ENCODE measurements at regions of chr19 and their contacts with region 1.

Region 1: GRCh38 chr19:40465557-40466150 is at the start of gene BLVRB:
- DNase-seq: peak; percentile 98 to 100
- ATAC-seq: peak; percentile 73 to 88
- H3K4me3 ChIP-seq: peak within 1 kb of the TSS; percentile 62
- H3K27ac ChIP-seq: peak within 1 kb of the TSS; percentile 86 to 89
- H3K4me1 ChIP-seq: peaks cover 38% of the 10 kb centered on the region
- CTCF ChIP-seq: no peak
- EP300 ChIP-seq: no peak
- POLR2A ChIP-seq: peak; percentile 95
- RAD21 ChIP-seq: no peak
- polyA plus RNA-seq, gene BLVRB: 202 and 241 TPM in 2 replicates

Region 2: GRCh38 chr19:40433391-40434216 is 32.0 kb before region 1 on chr19:
- CTCF ChIA-PET with region 1: interaction called, 950 read pairs
- POLR2A ChIA-PET with region 1: interaction called, 25 read pairs
- DNase-seq: peak; percentile 95 to 98
- ATAC-seq: peak; percentile 95 to 96
- H3K4me3 ChIP-seq: peak overlapping the region; percentile 43
- H3K27ac ChIP-seq: peak overlapping the region; percentile 90 to 95
- H3K4me1 ChIP-seq: peaks cover 28% of the 10 kb centered on the region
- CTCF ChIP-seq: no peak
- EP300 ChIP-seq: no peak
- POLR2A ChIP-seq: peak; percentile 90
- RAD21 ChIP-seq: no peak; a peak in 1 of 5 replicates

Region 3: DNA sequence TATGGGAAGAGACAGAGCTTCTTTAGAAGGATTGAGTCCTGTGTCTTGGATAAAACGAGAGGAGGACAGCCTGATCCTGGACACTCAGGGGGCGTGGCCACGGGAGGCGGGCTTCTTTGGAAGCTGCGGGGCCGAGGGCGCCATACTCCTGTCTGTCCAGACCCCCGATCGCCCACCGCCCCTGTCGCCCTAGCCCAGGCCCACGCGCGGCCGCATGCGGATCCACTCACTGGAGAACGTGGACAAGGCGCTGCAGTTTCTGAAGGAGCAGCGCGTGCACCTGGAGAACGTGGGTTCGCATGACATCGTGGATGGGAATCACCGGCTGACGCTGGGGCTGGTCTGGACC is 24.2 kb after region 1 on chr19:
- CTCF ChIA-PET with region 1: interaction called, 24 read pairs
- POLR2A ChIA-PET with region 1: interaction called, 14 read pairs
- DNase-seq: no peak
- ATAC-seq: peak in 1 of 2 experiments; percentile 2; a peak in 1 of 6 replicates
- H3K4me3 ChIP-seq: no peak overlapping the region
- H3K27ac ChIP-seq: no peak overlapping the region
- H3K4me1 ChIP-seq: 0 out of 3 replicates have a peak, but pooled peaks cover 6% of the 10 kb centered on the region
- CTCF ChIP-seq: no peak
- EP300 ChIP-seq: no peak
- POLR2A ChIP-seq: no peak
- RAD21 ChIP-seq: no peak

Region 4: GRCh38 chr19:40512473-40513344 is 47.1 kb after region 1 on chr19:
- CTCF ChIA-PET with region 1: interaction called, 85 read pairs
- POLR2A ChIA-PET with region 1: interaction called, 3 read pairs
- DNase-seq: peak in 1 of 2 experiments; percentile 65
- ATAC-seq: peak; percentile 73 to 76
- H3K4me3 ChIP-seq: peak overlapping the region; percentile 37
- H3K27ac ChIP-seq: 0 out of 6 replicates have a peak overlapping the region, but pooled peaks of 1 of the 2 experiments have one; percentile 0
- H3K4me1 ChIP-seq: peaks cover 5% of the 10 kb centered on the region; the same call in 1 of the 3 replicates
- CTCF ChIP-seq: no peak; the same call in 2 of the 3 replicates
- EP300 ChIP-seq: no peak
- POLR2A ChIP-seq: no peak
- RAD21 ChIP-seq: no peak

Region 5: GRCh38 chr19:40542202-40542859 is 76.7 kb after region 1 on chr19:
- CTCF ChIA-PET with region 1: interaction called, 29 read pairs
- POLR2A ChIA-PET with region 1: no interaction called
- DNase-seq: no peak
- ATAC-seq: no peak
- H3K4me3 ChIP-seq: no peak overlapping the region
- H3K27ac ChIP-seq: no peak overlapping the region
- H3K4me1 ChIP-seq: no peaks in the 10 kb centered on the region
- CTCF ChIP-seq: no peak
- EP300 ChIP-seq: no peak
- POLR2A ChIP-seq: no peak
- RAD21 ChIP-seq: no peak

Region 6: DNA sequence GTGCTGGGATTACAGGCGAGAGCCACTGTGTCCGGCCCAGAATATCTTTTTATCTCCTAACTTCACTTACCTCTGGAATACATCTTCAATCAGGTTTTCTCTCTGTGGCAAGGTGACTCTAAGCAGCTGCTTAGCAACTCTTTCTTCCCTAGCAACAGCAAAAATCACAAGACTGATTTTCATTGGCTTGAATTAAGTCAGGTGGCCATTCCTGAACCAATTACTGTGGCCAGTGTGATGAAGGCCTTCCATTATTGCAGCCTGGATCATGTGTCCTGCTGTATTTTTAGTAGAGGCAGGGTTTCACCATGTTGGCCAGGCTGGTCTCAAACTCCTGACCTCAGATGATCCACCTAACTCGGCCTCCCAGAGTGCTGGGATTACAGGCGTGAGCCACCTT is 126.5 kb after region 1 on chr19:
- CTCF ChIA-PET with region 1: interaction called, 128 read pairs
- POLR2A ChIA-PET with region 1: interaction called, 4 read pairs
- DNase-seq: peak; percentile 81 to 92
- ATAC-seq: peak in 1 of 2 experiments; percentile 58; a peak in 3 of 6 replicates
- H3K4me3 ChIP-seq: no peak overlapping the region
- H3K27ac ChIP-seq: no peak overlapping the region
- H3K4me1 ChIP-seq: peaks cover 36% of the 10 kb centered on the region
- CTCF ChIP-seq: no peak
- EP300 ChIP-seq: no peak
- POLR2A ChIP-seq: no peak
- RAD21 ChIP-seq: no peak

Region 7: GRCh38 chr19:40702337-40703012 is 236.8 kb after region 1 on chr19:
- CTCF ChIA-PET with region 1: no interaction called
- POLR2A ChIA-PET with region 1: no interaction called
- DNase-seq: peak; percentile 82 to 84
- ATAC-seq: peak; percentile 88 to 96
- H3K4me3 ChIP-seq: no peak overlapping the region
- H3K27ac ChIP-seq: peak overlapping the region in 1 of 2 experiments; percentile 44; a peak in 3 of 6 replicates
- H3K4me1 ChIP-seq: peaks cover 8% of the 10 kb centered on the region; the same call in 2 of the 3 replicates
- CTCF ChIP-seq: peak; percentile 69
- EP300 ChIP-seq: no peak
- POLR2A ChIP-seq: no peak
- RAD21 ChIP-seq: peak; percentile 71 to 83

Region 8: GRCh38 chr19:40831502-40832442 is 366.1 kb after region 1 on chr19:
- CTCF ChIA-PET with region 1: no interaction called
- POLR2A ChIA-PET with region 1: no interaction called
- DNase-seq: peak; percentile 60 to 90
- ATAC-seq: peak; percentile 70 to 86
- H3K4me3 ChIP-seq: no peak overlapping the region
- H3K27ac ChIP-seq: peak overlapping the region; percentile 47 to 61; a peak in 5 of 6 replicates
- H3K4me1 ChIP-seq: peaks cover 13% of the 10 kb centered on the region
- CTCF ChIP-seq: no peak
- EP300 ChIP-seq: peak; percentile 84 to 92; a peak in 4 of 5 replicates
- POLR2A ChIP-seq: no peak
- RAD21 ChIP-seq: peak in 1 of 2 experiments; percentile 50; a peak in 4 of 5 replicates